Right ventricle myocardium inferior (tissue), 1 donor: ENCODE measurements at regions of chr2 and their contacts with region 1.

Region 1: DNA sequence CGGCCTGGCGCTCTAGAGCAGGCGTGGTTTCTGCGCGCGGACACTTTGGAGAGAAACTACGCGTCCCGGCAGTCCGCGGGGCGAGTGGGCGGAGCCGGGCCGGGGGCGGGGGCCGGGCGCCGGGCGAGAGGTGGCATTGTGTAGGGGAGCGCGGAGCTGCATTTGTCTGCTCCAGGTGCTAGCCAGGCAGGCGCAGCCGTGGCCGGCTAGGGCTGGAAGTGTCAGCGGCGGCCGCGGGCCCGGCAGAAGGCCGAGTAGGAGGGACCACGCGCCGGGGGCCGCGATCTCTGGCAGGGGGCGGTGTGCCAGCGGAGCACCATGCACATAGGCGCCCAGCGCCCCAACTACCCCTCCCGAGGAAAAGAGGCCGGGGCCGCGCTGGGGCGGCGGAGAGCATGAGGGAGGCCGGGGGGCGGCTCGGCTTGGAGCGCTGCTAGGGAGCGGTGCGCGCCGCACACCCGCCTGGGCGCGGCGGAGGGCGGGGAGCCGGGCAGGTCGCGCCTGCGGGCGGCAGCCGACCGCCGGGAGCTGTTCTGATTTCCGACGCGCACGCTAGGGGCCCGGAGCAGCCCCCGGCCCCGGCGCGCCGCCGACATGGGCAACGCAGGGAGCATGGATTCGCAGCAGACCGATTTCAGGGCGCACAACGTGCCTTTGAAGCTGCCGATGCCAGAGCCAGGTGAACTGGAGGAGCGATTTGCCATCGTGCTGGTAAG is at the start of gene FMNL2:
- DNase-seq: peak; percentile 89
- ATAC-seq: peak; percentile 94
- total RNA-seq, gene FMNL2: 7.2 TPM

Region 2: DNA sequence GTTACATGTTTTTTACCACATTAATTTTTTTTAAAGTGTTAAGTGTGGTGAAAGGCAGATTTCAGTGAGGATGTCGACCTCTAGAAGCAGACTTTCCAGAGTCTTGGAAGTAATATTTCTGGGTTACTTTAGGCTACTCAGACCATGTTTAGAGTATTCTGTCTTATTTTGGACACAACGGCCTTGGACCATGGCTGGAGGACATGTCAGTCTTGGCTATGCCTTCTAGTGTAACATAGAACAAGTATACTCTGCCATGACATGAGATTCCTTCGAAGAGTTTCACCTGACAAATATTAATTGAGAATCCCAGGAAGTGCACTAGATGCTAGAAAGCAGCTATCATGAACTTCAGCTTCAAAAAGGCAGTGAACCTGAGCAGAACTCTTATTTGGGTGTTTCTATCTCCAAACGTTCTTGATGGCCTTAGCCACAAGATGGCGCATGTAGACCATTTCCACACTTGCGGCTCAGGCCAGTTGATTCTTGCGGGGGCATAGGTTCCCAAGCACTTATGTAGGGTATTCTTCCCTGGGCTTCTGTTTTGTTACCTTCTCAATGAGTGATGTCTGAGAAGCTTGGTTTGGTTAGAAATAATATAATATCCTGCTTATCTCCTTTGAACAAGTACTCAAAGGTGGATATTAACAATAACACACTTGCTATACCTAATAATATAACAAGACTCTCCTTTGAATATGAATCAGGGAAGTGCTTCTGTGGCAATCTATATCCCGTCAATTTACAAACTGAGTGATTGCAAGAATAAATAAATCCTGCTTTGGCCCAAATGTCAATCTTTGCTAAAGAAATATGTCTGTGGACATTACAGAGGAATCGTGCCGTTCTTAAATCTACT is 298.3 kb before region 1 on chr2:
- intact Hi-C with region 1: loop called (anchors 10 kb)
- DNase-seq: no peak
- ATAC-seq: peak; percentile 76

Region 3: GRCh38 chr2:152175458-152176325 is 159.5 kb before region 1 on chr2 and contains the start of gene STAM2:
- intact Hi-C with region 1: loop called (anchors 5 kb)
- DNase-seq: peak; percentile 95
- ATAC-seq: peak; percentile 95
- total RNA-seq, gene STAM2: 27.0 TPM

Region 4: DNA sequence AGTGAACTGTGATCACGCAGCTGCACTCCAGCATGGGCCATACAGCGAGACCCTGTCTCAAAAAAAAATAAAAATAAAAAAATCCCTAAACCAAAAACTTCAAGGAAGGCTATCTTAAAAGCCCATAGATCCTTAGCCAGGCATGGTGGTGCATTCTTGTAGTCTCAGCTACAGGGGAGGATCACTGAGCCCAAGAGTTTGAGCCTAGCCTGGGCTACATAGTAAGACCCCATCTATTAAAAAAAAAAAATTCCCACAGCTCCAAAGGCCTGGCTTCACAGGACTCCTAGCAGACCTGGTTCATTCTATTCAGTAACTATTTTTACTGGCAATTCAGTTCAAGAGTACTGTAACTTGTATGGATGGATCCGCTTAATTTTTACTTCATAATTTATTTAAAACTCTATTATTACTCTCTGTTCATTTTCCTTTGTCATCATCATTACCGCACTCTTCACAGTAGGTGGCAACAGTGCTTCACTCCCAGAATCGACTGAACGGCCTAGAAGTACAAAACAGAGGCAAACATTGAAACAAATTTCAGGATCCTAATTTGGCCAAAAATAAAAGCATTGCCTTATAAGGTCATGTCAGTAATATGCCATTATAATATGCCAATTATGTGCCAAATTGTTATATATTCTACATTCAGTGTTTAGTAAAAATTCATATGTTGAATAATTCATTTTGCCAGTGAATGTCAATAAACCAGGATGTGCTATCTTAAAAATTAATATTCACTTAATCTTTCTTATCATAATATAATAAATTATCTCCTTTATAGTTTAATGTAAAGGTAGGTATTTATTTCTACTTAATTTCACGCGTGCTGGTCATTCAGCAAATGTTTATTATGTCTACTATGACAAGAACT is 145.3 kb before region 1 on chr2:
- intact Hi-C with region 1: loop called (anchors 5 kb)
- DNase-seq: no peak
- ATAC-seq: peak; percentile 72

Region 5: DNA sequence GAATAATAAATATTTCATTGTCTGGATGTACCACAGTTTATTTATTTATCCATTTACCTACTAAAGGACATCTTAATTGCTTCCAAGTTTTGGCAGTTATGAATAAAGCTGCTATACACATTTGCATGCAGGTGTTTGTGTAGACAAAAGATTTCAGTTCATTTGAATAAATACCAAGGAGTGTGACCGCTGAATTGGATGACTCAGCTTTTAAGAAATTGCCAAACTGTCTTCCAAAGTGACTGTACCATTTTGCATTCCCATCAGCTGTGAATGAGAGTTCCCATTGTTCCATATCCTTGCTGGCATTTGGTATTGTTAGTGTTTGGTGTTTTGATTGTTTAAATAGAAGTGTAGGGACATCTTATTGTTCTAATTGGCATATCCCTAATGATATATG is 36.4 kb before region 1 on chr2:
- intact Hi-C with region 1: no loop called
- DNase-seq: no peak
- ATAC-seq: no peak

Region 6: GRCh38 chr2:152407204-152407721 is 72.1 kb after region 1 on chr2:
- intact Hi-C with region 1: loop called (anchors 5 kb)
- DNase-seq: no peak
- ATAC-seq: peak; percentile 69

Region 7: GRCh38 chr2:152497481-152498052 is 162.4 kb after region 1 on chr2:
- intact Hi-C with region 1: loop called (anchors 10 kb)
- DNase-seq: no peak
- ATAC-seq: no peak

Region 8: DNA sequence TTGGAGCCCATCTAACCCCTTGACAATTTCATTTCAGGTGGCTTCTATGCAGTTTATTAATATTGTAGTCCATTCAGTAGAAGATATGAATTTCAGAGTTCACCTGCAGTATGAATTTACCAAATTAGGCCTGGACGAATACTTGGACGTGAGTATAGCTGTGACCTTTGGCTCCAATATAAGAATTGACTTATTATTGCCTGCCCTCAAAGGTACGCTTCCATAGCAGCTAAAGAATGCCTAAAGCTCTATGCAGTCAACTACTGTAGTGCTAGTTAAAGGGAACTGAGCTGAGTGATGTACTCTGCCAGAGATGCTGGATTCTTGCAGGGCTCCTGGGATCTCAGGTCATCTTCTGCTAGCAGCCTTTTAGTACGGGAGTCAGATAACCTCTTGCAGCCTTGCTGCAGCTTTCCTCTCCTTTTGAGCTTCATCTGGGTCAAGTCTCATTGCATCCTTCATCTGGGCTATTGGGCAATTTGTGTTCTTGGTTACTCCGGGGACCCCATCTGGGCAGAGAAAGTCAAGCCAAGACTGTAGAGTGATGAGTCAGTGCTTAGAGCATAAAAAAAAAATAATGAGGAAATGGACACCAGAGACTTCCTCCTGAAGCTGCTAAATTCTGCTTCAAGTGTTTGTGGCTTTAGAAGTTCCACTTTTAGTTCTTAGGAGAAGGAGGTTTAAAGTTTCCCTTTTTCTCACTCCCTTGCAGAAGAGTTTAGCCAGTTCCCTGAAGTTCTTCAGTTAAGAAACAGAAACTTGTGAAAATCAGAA is 276.5 kb after region 1 on chr2:
- intact Hi-C with region 1: loop called (anchors 5 kb)
- DNase-seq: no peak
- ATAC-seq: peak; percentile 95